Panc1 (cell line): ENCODE measurements at regions of chr7 and their contacts with region 1.

Region 1: GRCh38 chr7:96151889-96152288 is 170.0 kb downstream of the SLC25A13 start:
- DNase-seq: no peak
- ATAC-seq: no peak
- H3K4me3 ChIP-seq: no peak overlapping the region
- H3K27ac ChIP-seq: no peak overlapping the region
- H3K4me1 ChIP-seq: no peaks in the 10 kb centered on the region
- H3K27me3 ChIP-seq: no peaks in the 10 kb centered on the region
- CTCF ChIP-seq: no peak

Region 2: GRCh38 chr7:95718556-95719410 is 433.1 kb before region 1 on chr7:
- CTCF ChIA-PET with region 1: no interaction called
- POLR2A ChIA-PET with region 1: no interaction called
- in situ Hi-C with region 1: no loop called
- intact Hi-C with region 1: no loop called
- DNase-seq: peak; percentile 13
- ATAC-seq: peak; percentile 58; the same call in 1 of the 2 replicates
- H3K4me3 ChIP-seq: no peak overlapping the region
- H3K27ac ChIP-seq: no peak overlapping the region
- H3K4me1 ChIP-seq: no peaks in the 10 kb centered on the region
- H3K27me3 ChIP-seq: peaks cover 2% of the 10 kb centered on the region; the same call in 1 of the 2 replicates
- CTCF ChIP-seq: peak; percentile 37; the same call in 1 of the 2 replicates

Region 3: GRCh38 chr7:96116173-96116572 is 35.7 kb before region 1 on chr7:
- CTCF ChIA-PET with region 1: no interaction called
- POLR2A ChIA-PET with region 1: interaction called, 12 read pairs
- in situ Hi-C with region 1: no loop called
- intact Hi-C with region 1: no loop called
- DNase-seq: no peak
- ATAC-seq: no peak
- H3K4me3 ChIP-seq: no peak overlapping the region
- H3K27ac ChIP-seq: no peak overlapping the region
- H3K4me1 ChIP-seq: no peaks in the 10 kb centered on the region
- H3K27me3 ChIP-seq: no peaks in the 10 kb centered on the region
- CTCF ChIP-seq: no peak